Naive thymus-derived CD4-positive, alpha-beta T cell (primary cell): ENCODE measurements at regions of chr7 and their contacts with region 1.

Region 1: DNA sequence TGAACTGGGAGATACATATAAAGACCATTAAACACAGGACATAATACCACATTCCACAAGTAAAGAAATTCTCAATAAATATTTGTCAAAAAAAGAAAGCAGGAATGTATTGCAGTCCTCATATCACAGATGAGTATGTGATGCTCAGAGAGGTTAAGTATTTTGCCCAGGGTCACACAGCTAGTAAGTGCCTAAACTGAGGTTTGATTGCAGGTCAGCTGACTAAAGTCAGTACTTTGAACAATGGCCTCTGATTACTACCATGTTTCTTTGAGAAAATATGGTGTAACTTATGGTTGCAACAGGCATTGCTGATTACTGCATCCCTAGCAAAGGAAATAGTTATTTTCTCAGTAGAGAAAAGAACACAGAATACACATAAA is 267.1 kb downstream of the ELMO1 start:
- DNase-seq: no peak
- ATAC-seq: no peak
- H3K4me3 ChIP-seq: no peak overlapping the region
- H3K4me3 Mint-ChIP-seq: no peak overlapping the region
- H3K27ac ChIP-seq: no peak overlapping the region
- H3K27ac Mint-ChIP-seq: no peak overlapping the region
- H3K4me1 ChIP-seq: peaks cover 0 to 9% of the 10 kb centered on the region in 2 donors
- H3K4me1 Mint-ChIP-seq: peaks cover 0 to 17% (median 10%) of the 10 kb centered on the region in 7 donors
- H3K27me3 ChIP-seq: no peaks in the 10 kb centered on the region
- H3K27me3 Mint-ChIP-seq: no peaks in the 10 kb centered on the region

Region 2: DNA sequence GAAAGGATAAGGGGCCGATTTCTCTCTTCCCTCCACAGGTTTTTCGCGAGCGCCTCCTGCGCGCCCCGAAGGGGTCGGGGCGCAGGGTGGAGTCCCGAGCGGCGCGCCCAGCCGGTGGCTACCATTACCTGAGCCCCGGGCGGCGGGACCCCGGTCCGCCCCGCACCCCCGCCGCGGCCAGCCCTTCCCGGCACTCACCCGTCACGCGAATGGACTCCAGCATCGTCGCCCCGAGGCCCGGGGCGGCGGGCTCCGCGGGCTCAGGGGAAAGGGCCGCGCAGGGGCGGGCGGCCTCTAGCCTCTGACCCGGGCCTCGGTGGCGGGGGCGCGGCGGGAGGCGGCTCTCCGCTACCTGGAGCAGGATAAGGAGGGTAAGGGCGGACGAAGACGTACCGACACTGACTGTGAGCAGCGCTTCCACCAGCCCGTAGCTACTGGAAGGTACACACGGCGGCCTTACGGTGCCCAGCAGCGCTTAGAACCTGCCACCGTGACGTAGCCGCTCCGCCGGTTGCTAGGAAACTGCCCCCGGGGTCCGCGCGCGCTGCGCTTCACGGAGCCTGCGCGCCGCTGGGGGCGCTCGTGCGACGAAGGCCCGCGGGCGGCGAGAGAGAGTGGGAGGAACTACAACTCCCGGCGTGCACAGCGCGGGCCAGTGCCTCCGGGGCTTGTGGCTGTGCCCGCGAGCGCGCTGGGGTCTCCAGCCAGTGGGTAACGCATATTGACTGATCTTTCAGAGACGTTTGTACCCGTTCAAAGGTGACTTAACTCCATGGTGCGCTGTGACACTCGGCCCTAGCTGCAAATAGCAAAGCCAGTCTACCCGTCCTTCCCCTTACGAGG is 814.6 kb before region 1 on chr7:
- CTCF ChIA-PET with region 1: no interaction called
- POLR2A ChIA-PET with region 1: no interaction called
- intact Hi-C with region 1: loop called in 1 of 2 experiments (anchors 5 kb)
- DNase-seq: peak; percentile 84 to 92 (median 91)
- ATAC-seq: peak; percentile 98
- H3K4me3 ChIP-seq: peak overlapping the region; percentile 76
- H3K4me3 Mint-ChIP-seq: peak overlapping the region; percentile 80 to 97 (median 93)
- H3K27ac ChIP-seq: peak overlapping the region; percentile 70
- H3K27ac Mint-ChIP-seq: peak overlapping the region in 8 of 9 donors; percentile 51 to 94 (median 82)
- H3K4me1 ChIP-seq: peaks cover 0 to 5% of the 10 kb centered on the region in 2 donors
- H3K4me1 Mint-ChIP-seq: peaks cover 0 to 8% (median 5%) of the 10 kb centered on the region in 7 donors
- H3K27me3 ChIP-seq: no peaks in the 10 kb centered on the region
- H3K27me3 Mint-ChIP-seq: peaks cover 0 to 57% (median 0%) of the 10 kb centered on the region in 5 donors

Region 3: DNA sequence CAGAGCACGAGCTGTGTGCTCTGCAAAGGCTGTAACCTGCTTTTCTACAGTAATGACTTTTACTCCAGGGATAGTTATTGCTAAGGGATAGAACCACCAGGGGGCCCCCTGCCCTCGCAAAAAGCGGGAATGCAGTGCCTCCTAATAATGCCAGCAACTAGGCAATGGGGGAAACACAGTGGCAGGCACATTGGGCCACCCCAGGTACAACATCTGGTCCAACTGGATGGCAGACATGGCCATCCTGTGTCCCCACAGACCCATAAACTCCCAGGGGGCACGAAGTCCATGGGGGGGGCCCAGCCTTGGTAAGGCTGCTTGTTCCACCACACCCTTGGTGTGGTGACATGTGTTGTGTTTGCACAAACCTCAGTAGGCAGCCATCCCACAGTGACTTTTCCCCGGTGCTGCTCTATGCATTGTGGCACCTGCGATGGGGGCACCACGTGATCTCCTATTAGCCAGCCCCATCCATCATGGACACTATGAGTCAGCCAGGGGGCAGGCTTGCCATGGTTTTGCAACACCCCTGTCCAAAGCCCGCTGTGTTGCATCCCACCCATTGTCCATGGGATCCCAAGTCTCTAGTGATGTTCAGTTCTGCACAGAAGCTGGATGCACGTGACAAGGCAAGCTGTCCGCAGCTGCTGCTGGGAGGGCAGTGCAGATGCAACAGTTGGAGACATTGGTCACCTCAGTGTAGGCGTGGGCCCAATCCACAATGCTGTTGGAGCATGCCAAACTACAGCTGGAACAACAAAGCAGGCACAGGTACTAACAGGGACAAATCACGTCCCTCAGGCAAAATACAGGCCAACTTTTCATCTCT is 707.9 kb before region 1 on chr7:
- CTCF ChIA-PET with region 1: interaction called, 3 read pairs
- POLR2A ChIA-PET with region 1: interaction called, 4 read pairs
- intact Hi-C with region 1: loop called (anchors 1 kb)
- DNase-seq: peak in 2 of 9 donors; percentile 21 to 30
- ATAC-seq: peak; percentile 24
- H3K4me3 ChIP-seq: no peak overlapping the region
- H3K4me3 Mint-ChIP-seq: no peak overlapping the region
- H3K27ac ChIP-seq: no peak overlapping the region
- H3K27ac Mint-ChIP-seq: no peak overlapping the region
- H3K4me1 ChIP-seq: peaks cover 0 to 4% of the 10 kb centered on the region in 2 donors
- H3K4me1 Mint-ChIP-seq: peaks cover 0 to 17% (median 6%) of the 10 kb centered on the region in 7 donors
- H3K27me3 ChIP-seq: no peaks in the 10 kb centered on the region
- H3K27me3 Mint-ChIP-seq: peaks cover 0 to 3% (median 0%) of the 10 kb centered on the region in 5 donors

Region 4: DNA sequence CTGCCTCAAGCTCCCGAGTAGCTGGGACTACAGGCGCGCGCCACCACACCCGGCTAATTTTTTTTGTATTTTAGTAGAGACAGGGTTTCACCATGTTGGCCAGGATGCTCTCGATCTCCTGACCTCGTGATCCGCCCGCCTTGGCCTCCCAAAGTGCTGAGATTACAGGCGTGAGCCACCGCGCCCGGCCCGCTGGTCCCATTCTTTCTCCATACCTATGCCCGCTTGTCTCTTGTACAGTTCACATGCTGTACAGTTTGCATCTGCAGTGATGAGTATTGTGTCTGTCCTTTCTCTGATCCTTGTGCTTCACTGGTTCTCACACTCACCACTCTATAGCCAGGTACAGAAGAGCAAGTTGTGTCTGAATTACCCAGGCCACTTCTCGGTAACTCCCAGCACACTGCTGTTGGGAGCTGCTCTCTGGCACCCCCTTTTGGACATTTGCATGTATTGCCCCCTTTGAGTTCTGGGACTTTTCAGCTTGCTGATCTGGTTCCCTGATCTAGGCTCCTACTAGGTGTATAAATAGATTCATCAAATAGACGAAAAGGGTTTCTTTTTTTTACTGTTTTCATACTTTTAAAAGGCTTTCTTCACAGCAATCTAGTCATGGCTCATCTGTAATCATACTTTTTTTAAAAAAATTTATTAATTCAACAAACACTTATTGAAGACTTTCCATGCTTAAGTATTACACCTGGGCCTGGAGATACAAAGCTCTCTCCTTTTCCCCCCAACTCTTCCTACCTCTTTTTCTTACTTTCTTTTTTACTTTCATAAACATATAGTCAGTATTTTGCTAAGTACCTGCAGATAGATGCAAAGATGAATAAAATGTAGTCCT is 510.7 kb before region 1 on chr7:
- CTCF ChIA-PET with region 1: interaction called, 7 read pairs
- POLR2A ChIA-PET with region 1: no interaction called
- intact Hi-C with region 1: loop called in 1 of 2 experiments (anchors 1 kb)
- DNase-seq: peak; percentile 37 to 80 (median 74)
- ATAC-seq: peak; percentile 98
- H3K4me3 ChIP-seq: no peak overlapping the region
- H3K4me3 Mint-ChIP-seq: peak overlapping the region in 7 of 10 donors; percentile 13 to 84 (median 54)
- H3K27ac ChIP-seq: no peak overlapping the region
- H3K27ac Mint-ChIP-seq: peak overlapping the region in 7 of 9 donors; percentile 19 to 92 (median 64)
- H3K4me1 ChIP-seq: peaks cover 0 to 7% of the 10 kb centered on the region in 2 donors
- H3K4me1 Mint-ChIP-seq: peaks cover 17 to 44% (median 37%) of the 10 kb centered on the region in 7 donors
- H3K27me3 ChIP-seq: no peaks in the 10 kb centered on the region
- H3K27me3 Mint-ChIP-seq: no peaks in the 10 kb centered on the region

Region 5: DNA sequence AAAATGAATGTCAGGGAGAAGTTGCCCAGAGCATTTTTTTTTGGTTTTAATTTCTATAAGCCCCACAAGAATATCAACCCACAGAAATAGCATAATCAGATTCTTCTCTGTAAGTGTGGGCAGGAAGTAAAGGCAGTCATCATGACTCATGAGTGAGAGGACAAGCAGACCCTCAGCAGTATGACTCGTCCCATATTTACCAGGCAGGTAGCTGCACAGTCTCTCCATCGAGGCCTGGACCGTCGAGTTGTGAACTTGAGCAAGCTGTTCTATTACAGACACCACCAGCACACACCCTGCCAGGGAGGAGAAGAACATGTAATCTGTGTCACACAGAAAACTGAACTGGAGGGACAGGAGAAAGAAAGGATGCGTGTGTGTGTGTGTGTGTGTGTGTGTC is 495.0 kb before region 1 on chr7:
- CTCF ChIA-PET with region 1: interaction called, 24 read pairs
- POLR2A ChIA-PET with region 1: no interaction called
- intact Hi-C with region 1: loop called (anchors 1 to 5 kb)
- DNase-seq: no peak
- ATAC-seq: peak; percentile 60
- H3K4me3 ChIP-seq: no peak overlapping the region
- H3K4me3 Mint-ChIP-seq: peak overlapping the region in 4 of 10 donors; percentile 26 to 78 (median 36)
- H3K27ac ChIP-seq: no peak overlapping the region
- H3K27ac Mint-ChIP-seq: peak overlapping the region in 6 of 9 donors; percentile 26 to 87 (median 67)
- H3K4me1 ChIP-seq: peaks cover 7 to 32% of the 10 kb centered on the region in 2 donors
- H3K4me1 Mint-ChIP-seq: peaks cover 13 to 68% (median 64%) of the 10 kb centered on the region in 7 donors
- H3K27me3 ChIP-seq: no peaks in the 10 kb centered on the region
- H3K27me3 Mint-ChIP-seq: no peaks in the 10 kb centered on the region

Region 6: GRCh38 chr7:36986429-36987362 is 194.8 kb before region 1 on chr7:
- CTCF ChIA-PET with region 1: interaction called, 8 read pairs
- POLR2A ChIA-PET with region 1: no interaction called
- intact Hi-C with region 1: loop called (anchors 1 to 2 kb)
- DNase-seq: peak in 8 of 9 donors; percentile 10 to 64 (median 44)
- ATAC-seq: peak; percentile 80
- H3K4me3 ChIP-seq: no peak overlapping the region
- H3K4me3 Mint-ChIP-seq: peak overlapping the region in 2 of 10 donors; percentile 29 to 51
- H3K27ac ChIP-seq: no peak overlapping the region
- H3K27ac Mint-ChIP-seq: peak overlapping the region in 3 of 9 donors; percentile 10 to 51 (median 19)
- H3K4me1 ChIP-seq: no peaks in the 10 kb centered on the region
- H3K4me1 Mint-ChIP-seq: peaks cover 24 to 69% (median 47%) of the 10 kb centered on the region in 7 donors
- H3K27me3 ChIP-seq: no peaks in the 10 kb centered on the region
- H3K27me3 Mint-ChIP-seq: no peaks in the 10 kb centered on the region

Region 7: DNA sequence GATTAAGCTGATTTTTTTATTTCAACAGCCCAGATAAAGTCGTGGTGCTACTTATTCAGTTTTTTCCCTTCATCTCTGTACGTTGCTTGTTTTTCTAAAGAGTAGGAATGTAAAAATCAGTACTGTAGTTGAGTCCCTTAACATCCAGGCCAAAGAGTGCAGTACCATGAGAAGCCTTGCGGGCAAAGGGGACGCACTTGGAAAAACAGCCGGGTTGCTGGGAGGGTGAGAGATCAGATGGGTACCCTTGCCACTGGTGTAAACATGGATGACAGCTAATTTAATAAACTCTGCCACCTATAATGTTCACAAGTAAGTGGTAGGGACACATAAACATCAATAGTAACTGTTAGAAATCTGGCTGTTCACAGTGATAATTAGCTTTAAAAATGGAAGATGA is 1972.1 kb after region 1 on chr7:
- CTCF ChIA-PET with region 1: no interaction called
- POLR2A ChIA-PET with region 1: no interaction called
- intact Hi-C with region 1: no loop called
- DNase-seq: no peak
- ATAC-seq: no peak
- H3K4me3 ChIP-seq: no peak overlapping the region
- H3K4me3 Mint-ChIP-seq: no peak overlapping the region
- H3K27ac ChIP-seq: no peak overlapping the region
- H3K27ac Mint-ChIP-seq: no peak overlapping the region
- H3K4me1 ChIP-seq: no peaks in the 10 kb centered on the region
- H3K4me1 Mint-ChIP-seq: no peaks in the 10 kb centered on the region
- H3K27me3 ChIP-seq: no peaks in the 10 kb centered on the region
- H3K27me3 Mint-ChIP-seq: peaks cover 2 to 25% (median 11%) of the 10 kb centered on the region in 5 donors